ENCODE measurements at regions of chr1 and their contacts with region 1.

Region 1: DNA sequence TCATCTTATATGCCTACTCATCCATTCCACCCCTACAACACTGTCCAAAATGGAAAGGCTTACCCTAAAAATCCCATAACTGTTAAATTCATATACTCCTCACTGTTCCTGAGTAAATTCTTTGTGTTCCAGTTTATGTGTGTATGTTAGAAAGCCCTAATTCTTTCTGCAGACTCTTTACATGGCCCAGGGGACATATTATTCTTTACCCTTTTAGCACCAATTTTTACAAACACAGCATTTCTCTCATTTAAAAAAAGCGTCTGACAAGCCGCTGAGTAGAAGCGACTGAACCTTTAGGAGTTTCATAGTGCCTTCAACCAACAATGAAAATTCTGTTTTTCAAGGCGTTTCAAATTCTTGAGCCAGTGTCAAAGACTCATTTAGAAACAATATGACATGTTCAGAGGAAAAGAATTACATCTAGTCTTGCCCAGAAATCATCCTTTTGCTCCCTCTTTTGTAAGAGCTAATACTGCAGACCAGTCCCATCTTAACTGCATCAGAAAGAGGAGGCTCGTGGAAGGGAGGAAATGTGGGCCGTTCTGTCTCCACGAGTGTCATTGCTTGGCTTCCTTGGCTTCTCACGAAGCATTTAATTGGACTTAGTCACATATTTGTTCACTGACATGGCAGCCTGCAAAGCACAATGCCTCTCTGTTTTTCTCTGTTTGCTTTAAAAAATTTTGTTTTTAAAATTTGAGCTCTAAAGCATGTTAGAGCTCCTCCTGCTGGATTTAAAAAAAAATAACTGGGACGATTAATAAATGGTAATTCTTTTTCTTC is 21.3 kb upstream of the C1orf105 start:
- DNase-seq: peak; percentile 37
- H3K4me3 Mint-ChIP-seq: peak overlapping the region; percentile 19
- H3K27ac Mint-ChIP-seq: peak overlapping the region; percentile 54
- H3K4me1 Mint-ChIP-seq: peaks cover 68% of the 10 kb centered on the region
- H3K27me3 Mint-ChIP-seq: no peaks in the 10 kb centered on the region

Region 2: GRCh38 chr1:171654942-171655745 is 744.0 kb before region 1 on chr1:
- CTCF ChIA-PET with region 1: no interaction called
- intact Hi-C with region 1: loop called (anchors 10 kb)
- DNase-seq: peak; percentile 92
- H3K4me3 Mint-ChIP-seq: peak overlapping the region; percentile 39
- H3K27ac Mint-ChIP-seq: no peak overlapping the region
- H3K4me1 Mint-ChIP-seq: peaks cover 11% of the 10 kb centered on the region
- H3K27me3 Mint-ChIP-seq: peaks cover 5% of the 10 kb centered on the region

Region 3: DNA sequence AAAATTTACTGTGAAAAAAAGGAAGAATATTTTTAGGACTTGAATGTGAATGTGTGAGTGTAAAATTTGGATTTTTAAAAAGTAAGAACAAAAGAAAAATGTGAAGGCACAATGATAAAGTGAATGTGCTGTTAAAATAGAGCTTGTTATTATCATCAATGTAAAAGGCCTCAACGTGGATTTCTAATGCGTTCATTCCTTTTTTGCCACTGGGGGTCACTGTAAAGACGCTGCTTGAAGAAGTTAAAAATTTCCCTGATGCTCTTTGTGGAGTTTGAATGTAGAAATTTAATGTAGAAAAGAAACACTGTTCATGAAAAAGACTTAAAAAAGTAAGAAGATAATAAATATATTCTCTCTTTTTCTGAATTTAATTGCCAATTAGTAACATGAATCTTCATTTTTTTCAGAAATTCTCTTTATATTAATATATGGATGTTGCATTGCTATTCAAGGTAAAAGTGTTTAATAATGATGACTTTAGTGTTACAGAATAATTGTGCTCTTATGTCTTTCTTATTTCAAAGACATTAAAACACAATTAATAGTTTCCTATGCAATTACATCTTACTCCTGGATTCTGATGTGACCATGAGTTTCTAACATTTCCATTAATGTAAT is 396.3 kb before region 1 on chr1:
- CTCF ChIA-PET with region 1: interaction called, 9 read pairs
- intact Hi-C with region 1: loop called (anchors 1 kb)
- DNase-seq: peak; percentile 39
- H3K4me3 Mint-ChIP-seq: no peak overlapping the region
- H3K27ac Mint-ChIP-seq: no peak overlapping the region
- H3K4me1 Mint-ChIP-seq: peaks cover 4% of the 10 kb centered on the region
- H3K27me3 Mint-ChIP-seq: no peaks in the 10 kb centered on the region

Region 4: DNA sequence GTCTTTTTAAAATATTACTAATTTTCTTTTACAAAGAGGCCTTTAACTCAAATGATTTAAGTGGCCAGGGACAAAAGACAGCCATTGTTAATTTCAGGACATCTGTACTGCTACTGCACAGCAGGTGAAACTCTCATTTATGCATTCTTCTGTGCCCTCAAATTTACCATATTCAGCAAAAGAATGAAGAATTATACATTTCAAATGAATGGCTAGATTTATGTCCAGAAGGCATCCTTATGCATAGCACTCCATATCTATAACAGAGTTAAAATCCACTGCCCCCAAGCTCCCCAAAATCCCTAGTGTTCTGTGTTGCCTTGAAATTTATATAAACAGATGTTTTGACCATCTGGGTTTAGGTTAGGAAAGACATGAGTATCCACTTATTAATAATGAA is 355.3 kb before region 1 on chr1:
- CTCF ChIA-PET with region 1: no interaction called
- intact Hi-C with region 1: no loop called
- DNase-seq: no peak
- H3K4me3 Mint-ChIP-seq: no peak overlapping the region
- H3K27ac Mint-ChIP-seq: no peak overlapping the region
- H3K4me1 Mint-ChIP-seq: peaks cover 10% of the 10 kb centered on the region
- H3K27me3 Mint-ChIP-seq: no peaks in the 10 kb centered on the region

Region 5: GRCh38 chr1:172154551-172154950 is 244.6 kb before region 1 on chr1:
- CTCF ChIA-PET with region 1: interaction called, 3 read pairs
- intact Hi-C with region 1: loop called (anchors 1 kb)
- DNase-seq: no peak
- H3K4me3 Mint-ChIP-seq: no peak overlapping the region
- H3K27ac Mint-ChIP-seq: peak overlapping the region; percentile 82
- H3K4me1 Mint-ChIP-seq: peaks cover 9% of the 10 kb centered on the region
- H3K27me3 Mint-ChIP-seq: no peaks in the 10 kb centered on the region

Region 6: GRCh38 chr1:172293429-172293828 is 105.7 kb before region 1 on chr1:
- CTCF ChIA-PET with region 1: no interaction called
- intact Hi-C with region 1: no loop called
- DNase-seq: no peak
- H3K4me3 Mint-ChIP-seq: no peak overlapping the region
- H3K27ac Mint-ChIP-seq: no peak overlapping the region
- H3K4me1 Mint-ChIP-seq: no peaks in the 10 kb centered on the region
- H3K27me3 Mint-ChIP-seq: no peaks in the 10 kb centered on the region

Region 7: GRCh38 chr1:172357753-172358385 is 41.3 kb before region 1 on chr1:
- CTCF ChIA-PET with region 1: interaction called, 22 read pairs
- intact Hi-C with region 1: loop called (anchors 1 kb)
- DNase-seq: no peak
- H3K4me3 Mint-ChIP-seq: no peak overlapping the region
- H3K27ac Mint-ChIP-seq: peak overlapping the region; percentile 55
- H3K4me1 Mint-ChIP-seq: peaks cover 64% of the 10 kb centered on the region
- H3K27me3 Mint-ChIP-seq: no peaks in the 10 kb centered on the region

Region 8: DNA sequence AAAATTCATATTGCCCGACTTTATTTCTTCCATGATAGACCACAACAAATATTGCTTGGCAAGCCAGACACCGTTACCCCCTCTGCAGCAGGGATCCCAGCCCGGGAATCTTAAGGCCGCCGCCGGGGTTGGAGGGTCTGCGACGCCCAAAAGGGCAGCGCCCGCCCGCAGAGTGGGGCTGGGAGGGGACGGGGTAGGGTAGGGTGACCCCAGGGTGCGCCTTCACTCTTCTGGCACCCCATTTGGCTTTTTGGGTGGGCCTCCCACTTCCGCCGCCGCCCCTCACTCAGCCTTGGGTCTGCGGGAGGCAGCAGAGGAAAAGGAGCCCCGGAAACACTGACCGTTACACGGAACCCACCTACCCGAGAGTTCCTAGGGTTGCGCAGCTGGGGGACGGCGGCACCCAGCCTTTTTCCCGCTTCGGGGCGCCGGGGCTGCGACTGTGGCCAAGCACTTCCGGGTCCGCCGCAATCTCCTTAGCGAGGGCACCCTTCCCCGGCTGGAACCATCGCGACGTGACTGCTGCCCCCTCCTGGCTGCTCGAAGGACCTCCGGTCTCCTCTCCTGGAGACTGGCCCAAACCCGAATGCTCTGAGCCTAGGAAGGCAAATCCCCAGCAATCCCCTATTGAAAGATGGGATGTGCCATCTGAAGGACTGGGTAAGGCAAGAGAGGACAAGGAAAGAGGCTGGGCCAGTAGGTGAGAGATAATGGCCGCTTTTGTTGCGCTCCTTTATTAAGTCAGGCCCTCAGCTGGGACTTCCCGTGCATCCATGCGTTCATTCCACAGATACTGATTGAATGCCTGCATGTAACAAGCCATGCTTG is 44.7 kb after region 1 on chr1 and contains the start of gene PIGC:
- CTCF ChIA-PET with region 1: interaction called, 7 read pairs
- intact Hi-C with region 1: loop called (anchors 5 kb)
- DNase-seq: peak; percentile 96
- H3K4me3 Mint-ChIP-seq: peak within 1 kb of the TSS; percentile 86
- H3K27ac Mint-ChIP-seq: peak within 1 kb of the TSS; percentile 86
- H3K4me1 Mint-ChIP-seq: peaks cover 35% of the 10 kb centered on the region
- H3K27me3 Mint-ChIP-seq: no peaks in the 10 kb centered on the region
- total RNA-seq, gene PIGC: 17.5 to 18.7 TPM